ENCODE measurements at regions of chr2 and their contacts with region 1.

Region 1: GRCh38 chr2:191811807-191812602 is 34.9 kb downstream of the CAVIN2 start:
- DNase-seq: peak in 1 of 2 donors; percentile 49
- ATAC-seq: peak; percentile 89
- H3K4me3 ChIP-seq: no peak overlapping the region
- H3K27ac ChIP-seq: no peak overlapping the region
- H3K4me1 ChIP-seq: no peaks in the 10 kb centered on the region
- H3K27me3 ChIP-seq: no peaks in the 10 kb centered on the region

Region 2: DNA sequence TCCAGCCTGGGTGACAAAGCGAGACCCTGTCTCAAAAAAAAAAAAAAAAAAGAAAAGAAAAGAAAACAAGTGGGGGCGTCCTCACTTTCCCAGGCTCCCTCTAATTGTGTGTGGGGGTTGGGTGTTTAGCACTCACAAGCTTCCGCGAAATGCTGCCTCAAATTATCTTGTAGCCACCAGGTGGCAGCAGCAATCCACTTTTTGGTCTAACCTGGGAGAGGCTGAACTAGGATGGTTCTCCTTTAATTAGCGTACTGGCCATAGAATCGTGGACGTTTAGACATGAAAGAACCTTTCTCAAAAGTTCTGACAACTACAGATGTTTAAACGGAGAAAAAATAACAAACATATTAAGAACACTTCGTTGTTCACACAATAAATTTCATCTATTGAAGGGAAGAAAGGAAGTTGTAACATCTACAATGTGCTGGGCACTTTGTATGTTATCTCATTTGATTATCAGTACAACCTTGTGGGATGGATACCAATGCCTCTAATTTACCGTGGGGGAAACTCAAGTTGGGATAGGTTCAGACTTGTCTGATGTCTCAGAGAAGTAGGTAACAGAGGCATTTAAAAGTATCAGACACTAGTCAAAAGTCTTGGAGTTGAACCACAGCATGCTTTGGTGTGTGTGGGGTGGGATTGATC is 256.8 kb before region 1 on chr2:
- intact Hi-C with region 1: loop called in 1 of 2 experiments (anchors 10 kb)
- DNase-seq: peak; percentile 85 to 90
- ATAC-seq: peak; percentile 88
- H3K4me3 ChIP-seq: no peak overlapping the region
- H3K27ac ChIP-seq: no peak overlapping the region
- H3K4me1 ChIP-seq: no peaks in the 10 kb centered on the region
- H3K27me3 ChIP-seq: no peaks in the 10 kb centered on the region

Region 3: DNA sequence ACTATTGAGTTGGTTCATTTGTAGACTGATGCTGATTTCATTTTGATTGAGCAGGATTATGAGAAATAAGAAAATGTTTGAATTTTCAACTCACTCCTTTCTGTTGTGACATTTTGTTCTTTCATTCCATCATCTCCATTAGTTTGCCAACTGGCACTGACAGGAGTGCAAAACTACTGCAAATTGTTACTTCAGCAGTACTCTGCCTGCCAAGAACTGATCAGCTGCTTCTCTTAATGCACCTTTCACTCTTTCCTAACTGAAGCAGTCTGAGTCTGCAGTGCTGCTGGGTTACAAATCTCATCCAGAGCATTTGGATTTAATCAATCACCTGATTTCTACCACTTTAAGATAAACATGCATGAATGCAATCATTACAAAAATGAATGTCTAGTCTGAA is 311.8 kb after region 1 on chr2:
- intact Hi-C with region 1: no loop called
- DNase-seq: no peak
- ATAC-seq: peak; percentile 58
- H3K4me3 ChIP-seq: no peak overlapping the region
- H3K27ac ChIP-seq: no peak overlapping the region
- H3K4me1 ChIP-seq: no peaks in the 10 kb centered on the region
- H3K27me3 ChIP-seq: no peaks in the 10 kb centered on the region

Region 4: GRCh38 chr2:192162392-192163042 is 350.5 kb after region 1 on chr2:
- intact Hi-C with region 1: loop called (anchors 1 to 2 kb)
- DNase-seq: no peak
- ATAC-seq: peak; percentile 87
- H3K4me3 ChIP-seq: no peak overlapping the region
- H3K27ac ChIP-seq: no peak overlapping the region
- H3K4me1 ChIP-seq: no peaks in the 10 kb centered on the region
- H3K27me3 ChIP-seq: no peaks in the 10 kb centered on the region

Region 5: DNA sequence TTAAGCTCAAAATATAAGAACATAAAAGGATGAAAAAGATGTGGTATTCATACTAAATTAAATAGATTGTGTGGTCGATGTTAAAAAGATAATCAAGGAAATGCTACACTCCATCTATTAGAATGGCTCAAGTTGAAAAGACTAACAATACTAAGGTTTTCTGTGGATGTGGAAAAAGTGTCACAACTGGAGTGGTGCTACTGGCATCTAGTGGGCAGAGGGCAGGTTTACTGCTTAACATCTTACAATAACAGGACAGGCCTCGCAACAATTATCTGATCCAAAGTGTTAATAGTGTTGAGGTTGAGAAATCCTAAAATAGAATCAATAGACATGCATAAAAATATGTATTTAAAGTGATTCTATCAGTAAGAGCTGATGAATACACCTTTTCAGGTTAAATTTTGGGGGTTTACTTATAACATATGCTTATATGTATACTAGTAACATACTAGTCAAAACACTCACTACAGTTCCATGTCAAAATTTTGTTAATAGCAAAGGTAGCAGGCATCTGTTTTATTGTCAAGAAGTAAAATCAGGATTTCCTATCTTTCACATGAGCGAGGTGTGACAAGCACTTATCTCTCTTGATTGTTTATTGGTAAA is 474.2 kb after region 1 on chr2:
- intact Hi-C with region 1: loop called in 1 of 2 experiments (anchors 10 kb)
- DNase-seq: no peak
- ATAC-seq: no peak
- H3K4me3 ChIP-seq: no peak overlapping the region
- H3K27ac ChIP-seq: no peak overlapping the region
- H3K4me1 ChIP-seq: no peaks in the 10 kb centered on the region
- H3K27me3 ChIP-seq: no peaks in the 10 kb centered on the region